ENCODE measurements at regions of chr20 and their contacts with region 1.

Region 1: DNA sequence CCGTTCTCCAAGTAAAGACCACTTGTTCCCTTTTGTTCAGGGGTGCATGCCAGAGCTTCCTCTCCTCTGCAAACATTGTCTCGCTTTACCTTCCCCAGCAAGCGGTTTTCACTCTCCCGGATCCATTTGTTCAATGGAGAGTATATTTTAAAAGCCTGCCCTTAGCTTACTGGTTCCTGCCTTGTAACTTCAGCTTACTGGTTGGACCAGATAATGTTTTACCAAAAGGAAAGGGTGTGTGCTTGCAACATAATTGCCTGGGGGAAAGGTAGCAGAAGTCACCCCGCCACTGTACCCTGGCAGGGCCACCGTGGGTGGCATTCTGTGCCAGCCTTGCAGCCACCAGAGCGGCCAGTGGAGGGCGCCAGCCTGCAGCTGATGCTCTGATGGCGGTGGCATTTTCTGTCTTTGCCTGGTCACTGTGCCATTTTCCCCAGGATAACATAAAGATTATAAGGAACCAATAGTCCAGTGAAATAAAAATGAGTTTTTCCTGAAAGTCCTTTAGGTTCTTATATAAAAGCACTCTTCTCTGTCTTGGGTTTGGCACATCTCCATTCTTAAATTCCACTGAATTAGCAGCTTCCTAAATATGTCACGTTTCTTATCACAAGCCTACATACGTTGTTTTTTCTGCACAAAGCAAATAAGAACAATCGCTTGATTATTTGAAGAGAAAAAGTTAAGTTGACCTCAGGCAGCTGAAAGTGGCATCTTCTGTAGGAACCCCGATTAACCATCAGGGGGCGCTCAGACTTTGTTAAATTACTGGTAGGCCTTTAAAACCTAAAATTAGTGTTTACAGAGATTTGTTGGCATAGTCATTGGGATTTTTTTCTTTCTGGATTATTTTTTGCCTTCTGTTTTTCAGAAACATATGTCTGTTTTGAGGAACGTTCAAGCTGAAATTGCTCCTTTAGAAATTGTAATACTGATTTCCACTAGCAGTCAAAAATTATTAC is 67.4 kb upstream of the XRN2 start:
- DNase-seq: peak; percentile 43
- H3K4me3 ChIP-seq: no peak overlapping the region
- H3K27ac ChIP-seq: no peak overlapping the region
- H3K4me1 ChIP-seq: peaks cover 6% of the 10 kb centered on the region
- H3K27me3 ChIP-seq: no peaks in the 10 kb centered on the region
- CTCF ChIP-seq: peak; percentile 80 to 97

Region 2: DNA sequence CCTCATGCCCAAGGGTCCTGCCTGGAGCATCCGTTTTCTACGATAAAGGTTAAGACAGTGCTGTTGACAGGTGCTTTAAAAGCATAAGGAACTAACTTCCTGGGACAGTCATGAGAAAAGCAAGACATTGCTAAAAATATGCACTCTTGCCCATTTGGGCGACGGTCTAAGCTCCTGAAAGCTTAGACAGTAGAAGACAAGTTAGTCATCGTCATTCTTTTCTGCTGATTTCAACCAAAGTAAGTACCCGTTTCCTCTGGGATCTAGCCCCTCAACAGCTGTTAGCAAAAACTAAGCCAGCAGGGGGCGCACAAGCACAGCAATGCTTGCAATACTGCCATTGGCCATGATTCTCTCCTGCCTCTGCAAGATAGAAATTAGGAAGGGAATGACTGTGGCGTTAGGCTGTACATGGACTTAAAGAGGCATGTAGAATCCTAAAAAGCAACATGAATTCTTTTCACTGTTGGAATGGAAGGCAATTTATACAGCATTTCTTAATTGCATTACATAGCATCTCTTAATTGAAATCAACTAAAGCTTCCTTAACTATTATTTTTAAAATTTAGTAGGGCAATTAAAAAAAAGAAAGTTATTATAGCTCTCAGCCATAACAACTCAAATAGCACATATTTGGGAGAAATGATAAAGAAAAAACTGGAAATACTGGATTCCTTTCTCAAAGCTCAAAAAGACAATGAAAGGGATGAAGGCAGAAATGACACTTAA is 375.5 kb before region 1 on chr20:
- CTCF ChIA-PET with region 1: no interaction called
- dilution Hi-C with region 1: no loop called
- in situ Hi-C with region 1: loop called in 1 of 2 experiments (anchors 25 kb)
- intact Hi-C with region 1: loop called (anchors 5 kb)
- DNase-seq: peak; percentile 72
- H3K4me3 ChIP-seq: no peak overlapping the region
- H3K27ac ChIP-seq: no peak overlapping the region
- H3K4me1 ChIP-seq: no peaks in the 10 kb centered on the region
- H3K27me3 ChIP-seq: no peaks in the 10 kb centered on the region
- CTCF ChIP-seq: peak; percentile 93 to 98

Region 3: GRCh38 chr20:21004386-21005076 is 231.2 kb before region 1 on chr20:
- CTCF ChIA-PET with region 1: no interaction called
- dilution Hi-C with region 1: no loop called
- in situ Hi-C with region 1: no loop called
- intact Hi-C with region 1: no loop called
- DNase-seq: no peak
- H3K4me3 ChIP-seq: no peak overlapping the region
- H3K27ac ChIP-seq: no peak overlapping the region
- H3K4me1 ChIP-seq: no peaks in the 10 kb centered on the region
- H3K27me3 ChIP-seq: no peaks in the 10 kb centered on the region
- CTCF ChIP-seq: no peak

Region 4: DNA sequence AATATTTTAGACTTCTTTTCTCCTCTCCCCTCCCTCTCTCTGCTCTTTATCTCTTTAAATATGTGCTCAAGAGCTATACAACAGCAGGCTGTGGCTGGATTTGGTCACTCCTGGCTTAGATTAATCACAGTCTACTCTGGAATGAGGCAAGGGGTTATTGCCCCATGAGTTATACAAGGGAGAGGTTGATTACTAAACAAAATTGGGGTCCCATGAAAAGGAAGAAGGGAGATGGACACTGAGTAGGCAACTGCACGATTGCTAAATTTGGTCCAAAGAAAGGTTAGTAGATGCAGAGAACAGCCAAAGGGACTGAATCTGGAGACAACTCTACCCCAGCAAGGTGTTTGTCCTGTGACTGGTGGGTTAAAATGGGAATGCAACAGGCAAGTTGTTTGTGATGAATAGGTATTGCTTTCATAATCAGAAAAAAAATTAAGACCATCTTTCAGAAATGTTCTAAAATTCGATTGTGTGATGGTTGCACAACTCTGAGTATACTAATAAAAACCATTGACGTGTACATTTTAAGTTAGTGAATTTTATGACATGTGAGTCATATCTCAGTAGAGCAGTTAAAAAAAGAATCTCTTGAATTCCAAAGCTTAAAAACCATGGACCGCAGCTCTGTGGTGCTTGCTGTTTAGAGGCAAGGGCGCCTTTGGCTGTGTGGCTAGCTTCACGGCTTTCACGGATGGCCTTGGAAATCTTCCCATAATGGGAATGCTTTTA is 52.8 kb before region 1 on chr20:
- CTCF ChIA-PET with region 1: interaction called, 24 read pairs
- dilution Hi-C with region 1: no loop called
- in situ Hi-C with region 1: no loop called
- intact Hi-C with region 1: no loop called
- DNase-seq: peak; percentile 72
- H3K4me3 ChIP-seq: no peak overlapping the region
- H3K27ac ChIP-seq: no peak overlapping the region
- H3K4me1 ChIP-seq: peaks cover 23% of the 10 kb centered on the region
- H3K27me3 ChIP-seq: no peaks in the 10 kb centered on the region
- CTCF ChIP-seq: no peak

Region 5: GRCh38 chr20:21202284-21202683 is 33.5 kb before region 1 on chr20:
- CTCF ChIA-PET with region 1: no interaction called
- dilution Hi-C with region 1: no loop called
- in situ Hi-C with region 1: no loop called
- intact Hi-C with region 1: no loop called
- DNase-seq: peak; percentile 17
- H3K4me3 ChIP-seq: no peak overlapping the region
- H3K27ac ChIP-seq: no peak overlapping the region
- H3K4me1 ChIP-seq: no peaks in the 10 kb centered on the region
- H3K27me3 ChIP-seq: no peaks in the 10 kb centered on the region
- CTCF ChIP-seq: no peak

Region 6: GRCh38 chr20:21262812-21263211 is 27.0 kb after region 1 on chr20:
- CTCF ChIA-PET with region 1: no interaction called
- dilution Hi-C with region 1: no loop called
- in situ Hi-C with region 1: no loop called
- intact Hi-C with region 1: no loop called
- DNase-seq: no peak
- H3K4me3 ChIP-seq: no peak overlapping the region
- H3K27ac ChIP-seq: no peak overlapping the region
- H3K4me1 ChIP-seq: no peaks in the 10 kb centered on the region
- H3K27me3 ChIP-seq: no peaks in the 10 kb centered on the region
- CTCF ChIP-seq: no peak

Region 7: GRCh38 chr20:21505161-21505809 is 269.5 kb after region 1 on chr20:
- CTCF ChIA-PET with region 1: interaction called, 3 read pairs
- dilution Hi-C with region 1: no loop called
- in situ Hi-C with region 1: loop called (anchors 5 to 10 kb)
- intact Hi-C with region 1: loop called (anchors 1 kb)
- DNase-seq: peak; percentile 55
- H3K4me3 ChIP-seq: peak overlapping the region; percentile 55 to 67 (median 61)
- H3K27ac ChIP-seq: no peak overlapping the region
- H3K4me1 ChIP-seq: peaks cover 12% of the 10 kb centered on the region
- H3K27me3 ChIP-seq: peaks cover 27% of the 10 kb centered on the region
- CTCF ChIP-seq: peak; percentile 93 to 98

Region 8: DNA sequence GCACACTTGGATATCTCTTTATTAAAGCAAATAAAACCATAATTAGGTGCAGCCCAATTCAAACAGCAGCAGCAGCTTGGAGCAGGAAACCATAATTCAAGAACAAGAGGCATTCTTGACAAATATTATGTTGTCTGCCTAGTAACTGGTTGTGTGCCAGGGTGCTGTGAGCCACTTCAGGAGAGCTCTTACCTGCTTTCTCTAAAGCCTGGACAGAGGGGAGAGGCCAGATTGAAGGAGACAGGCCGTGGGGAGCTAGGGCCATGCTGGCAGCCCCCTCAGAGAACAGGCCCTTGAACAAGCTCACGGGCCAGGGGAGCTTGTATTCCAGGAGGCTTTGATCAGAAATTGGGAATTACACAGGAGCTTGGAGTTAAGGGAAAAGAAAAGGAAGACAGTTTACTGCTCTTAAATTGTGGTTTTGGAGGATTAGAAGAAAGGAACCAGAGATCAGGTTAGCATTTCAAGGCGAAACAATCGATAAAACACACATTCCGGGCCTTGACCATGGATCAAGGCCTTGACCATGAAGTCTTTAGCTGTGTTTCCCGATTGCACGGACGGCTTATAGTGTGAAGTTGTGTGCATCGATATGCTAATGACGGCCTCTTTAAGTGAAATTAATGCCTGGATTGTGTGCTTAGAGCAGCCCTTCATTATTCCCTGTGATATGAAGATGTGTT is 347.9 kb after region 1 on chr20:
- CTCF ChIA-PET with region 1: interaction called, 16 read pairs
- dilution Hi-C with region 1: no loop called
- in situ Hi-C with region 1: no loop called
- intact Hi-C with region 1: no loop called
- DNase-seq: no peak
- H3K4me3 ChIP-seq: no peak overlapping the region
- H3K27ac ChIP-seq: no peak overlapping the region
- H3K4me1 ChIP-seq: no peaks in the 10 kb centered on the region
- H3K27me3 ChIP-seq: peaks cover 7% of the 10 kb centered on the region
- CTCF ChIP-seq: no peak

Measured in mammary epithelial cell (primary cell).